ENCODE measurements at regions of chr17 and their contacts with region 1.

Region 1: GRCh38 chr17:49315551-49316257 is 46.3 kb downstream of the ZNF652 start:
- DNase-seq: peak; percentile 58 to 79 (median 78)
- H3K4me3 ChIP-seq: peak overlapping the region in 2 of 3 experiments; percentile 20 to 59
- H3K4me3 Mint-ChIP-seq: peak overlapping the region; percentile 56 to 84
- H3K27ac ChIP-seq: peak overlapping the region in 1 of 2 donors; percentile 76
- H3K27ac Mint-ChIP-seq: peak overlapping the region in 4 of 7 donors; percentile 20 to 77 (median 74)
- H3K4me1 ChIP-seq: peaks cover 28 to 32% of the 10 kb centered on the region in 2 donors
- H3K4me1 Mint-ChIP-seq: peaks cover 30% of the 10 kb centered on the region
- H3K27me3 ChIP-seq: no peaks in the 10 kb centered on the region
- H3K27me3 Mint-ChIP-seq: no peaks in the 10 kb centered on the region
- CTCF ChIP-seq: peak; percentile 86

Region 2: DNA sequence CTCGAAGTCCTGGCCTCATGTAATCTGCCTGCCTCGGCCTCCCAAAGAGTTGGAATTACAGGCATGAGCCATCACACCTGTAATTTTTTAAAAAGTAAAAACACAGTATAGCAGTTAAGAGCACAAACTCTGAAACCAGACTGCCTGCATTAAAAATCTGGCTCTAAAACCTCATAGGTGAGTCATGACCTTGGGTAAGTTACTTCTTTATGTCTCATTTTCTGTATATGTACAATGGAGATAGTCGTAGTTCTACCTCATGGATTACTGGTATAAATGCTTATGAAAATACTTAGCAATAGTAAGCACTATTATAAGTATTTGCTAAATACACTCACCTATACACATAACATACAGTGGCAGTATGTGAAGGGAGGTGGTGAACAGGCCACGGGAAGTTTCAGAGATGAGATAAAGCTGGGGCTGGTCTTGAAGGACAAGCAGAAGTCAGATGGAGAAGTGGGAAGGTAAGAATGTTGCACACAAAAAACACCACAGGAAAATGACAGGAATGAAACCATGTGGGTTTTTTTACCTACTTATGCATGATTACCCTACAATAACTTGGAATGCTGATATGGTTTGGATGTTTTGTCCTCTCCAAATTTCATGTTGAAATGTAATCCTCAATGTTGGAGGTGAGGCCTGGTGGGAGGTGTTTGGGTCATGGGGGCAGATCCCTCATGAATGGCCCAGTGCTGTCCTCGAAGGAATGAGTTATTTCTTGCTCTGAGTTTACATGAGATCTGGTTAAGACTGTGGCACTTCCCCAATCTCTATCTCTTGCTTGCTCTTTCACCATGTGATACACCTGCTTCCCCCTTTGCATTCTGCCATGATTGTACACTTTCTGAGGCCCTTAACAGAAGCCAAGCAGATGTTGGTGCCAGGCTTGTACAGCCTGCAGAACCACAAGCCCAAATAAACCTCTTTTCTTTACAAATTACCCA is 12.4 kb after region 1 on chr17:
- intact Hi-C with region 1: no loop called
- DNase-seq: peak; percentile 33 to 57 (median 54)
- H3K4me3 ChIP-seq: no peak overlapping the region
- H3K4me3 Mint-ChIP-seq: no peak overlapping the region
- H3K27ac ChIP-seq: peak overlapping the region in 1 of 2 donors; percentile 30
- H3K27ac Mint-ChIP-seq: peak overlapping the region; percentile 15 to 76 (median 60)
- H3K4me1 ChIP-seq: peaks cover 21 to 26% of the 10 kb centered on the region in 2 donors
- H3K4me1 Mint-ChIP-seq: peaks cover 28% of the 10 kb centered on the region
- H3K27me3 ChIP-seq: no peaks in the 10 kb centered on the region
- H3K27me3 Mint-ChIP-seq: peaks cover 0 to 2% (median 0%) of the 10 kb centered on the region in 3 donors
- CTCF ChIP-seq: no peak

Region 3: GRCh38 chr17:49390548-49391324 is 75.0 kb after region 1 on chr17:
- intact Hi-C with region 1: loop called (anchors 1 to 2 kb)
- DNase-seq: peak; percentile 75 to 90 (median 86)
- H3K4me3 ChIP-seq: peak overlapping the region; percentile 37 to 72 (median 61)
- H3K4me3 Mint-ChIP-seq: peak overlapping the region; percentile 91 to 96
- H3K27ac ChIP-seq: peak overlapping the region; percentile 89 to 97
- H3K27ac Mint-ChIP-seq: peak overlapping the region; percentile 93 to 99 (median 99)
- H3K4me1 ChIP-seq: peaks cover 75 to 78% of the 10 kb centered on the region in 2 donors
- H3K4me1 Mint-ChIP-seq: peaks cover 73% of the 10 kb centered on the region
- H3K27me3 ChIP-seq: no peaks in the 10 kb centered on the region
- H3K27me3 Mint-ChIP-seq: peaks cover 0 to 2% (median 1%) of the 10 kb centered on the region in 3 donors
- CTCF ChIP-seq: no peak